Prostate gland (tissue), 2 donors: ENCODE measurements at regions of chr14 and their contacts with region 1.

Region 1: DNA sequence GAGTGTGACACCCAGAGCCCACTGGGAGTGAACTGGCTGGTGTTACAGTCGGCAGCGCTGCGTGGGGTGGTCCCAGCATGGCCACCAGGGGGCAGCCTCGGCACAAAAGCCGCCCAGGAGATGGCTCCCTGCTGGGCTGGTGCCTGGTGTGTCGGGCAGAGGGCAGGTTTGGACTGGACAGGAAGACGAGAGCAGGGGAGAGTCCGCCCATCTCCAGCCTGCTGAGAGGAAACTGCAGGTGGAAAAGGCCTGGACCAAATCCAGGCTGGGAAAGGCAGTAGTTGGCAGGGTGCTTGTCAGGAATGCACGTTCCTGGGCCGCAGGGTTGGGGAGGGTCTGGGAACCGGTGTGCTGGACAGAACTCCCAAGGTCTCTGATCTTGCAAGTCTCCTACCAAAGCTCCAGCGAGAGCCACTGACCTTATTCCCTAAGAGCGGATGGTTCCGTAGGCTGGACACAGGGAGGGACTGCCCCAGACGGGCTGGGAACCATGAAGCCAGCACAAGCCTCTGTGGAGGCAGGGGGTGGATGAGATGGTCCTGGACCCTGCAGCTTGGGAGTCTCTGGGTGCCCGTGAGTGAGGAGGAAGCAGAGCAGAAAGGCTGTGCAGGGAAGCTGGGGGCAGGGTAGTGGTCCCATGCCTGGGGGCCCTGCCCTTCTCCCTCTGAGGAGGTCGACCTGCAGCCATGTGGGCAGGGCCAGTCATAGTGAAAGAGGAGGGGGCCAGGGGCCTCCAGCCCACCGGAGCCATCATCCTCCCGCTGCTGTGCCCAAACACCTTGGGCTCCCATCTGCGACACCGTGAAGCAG is 1.8 kb downstream of the AHNAK2 start:
- DNase-seq: peak; percentile 80
- H3K4me3 ChIP-seq: no peak overlapping the region
- H3K27ac ChIP-seq: no peak overlapping the region
- H3K4me1 ChIP-seq: peaks cover 39% of the 10 kb centered on the region
- H3K27me3 ChIP-seq: no peaks in the 10 kb centered on the region
- CTCF ChIP-seq: peak; percentile 94 to 98 (median 98)
- POLR2A ChIP-seq: peak; percentile 17

Region 2: GRCh38 chr14:105020815-105021655 is 44.6 kb after region 1 on chr14 and contains the start of gene CDCA4:
- intact Hi-C with region 1: loop called (anchors 5 kb)
- DNase-seq: peak; percentile 97
- H3K4me3 ChIP-seq: peak within 1 kb of the TSS; percentile 81 to 82
- H3K27ac ChIP-seq: peak within 1 kb of the TSS; percentile 76 to 77
- H3K4me1 ChIP-seq: peaks cover 3% of the 10 kb centered on the region
- H3K27me3 ChIP-seq: no peaks in the 10 kb centered on the region
- CTCF ChIP-seq: peak in 2 of 4 experiments; percentile 27 to 29
- POLR2A ChIP-seq: peak; percentile 92
- total RNA-seq, gene CDCA4: 12.3 to 17.6 TPM

Region 3: DNA sequence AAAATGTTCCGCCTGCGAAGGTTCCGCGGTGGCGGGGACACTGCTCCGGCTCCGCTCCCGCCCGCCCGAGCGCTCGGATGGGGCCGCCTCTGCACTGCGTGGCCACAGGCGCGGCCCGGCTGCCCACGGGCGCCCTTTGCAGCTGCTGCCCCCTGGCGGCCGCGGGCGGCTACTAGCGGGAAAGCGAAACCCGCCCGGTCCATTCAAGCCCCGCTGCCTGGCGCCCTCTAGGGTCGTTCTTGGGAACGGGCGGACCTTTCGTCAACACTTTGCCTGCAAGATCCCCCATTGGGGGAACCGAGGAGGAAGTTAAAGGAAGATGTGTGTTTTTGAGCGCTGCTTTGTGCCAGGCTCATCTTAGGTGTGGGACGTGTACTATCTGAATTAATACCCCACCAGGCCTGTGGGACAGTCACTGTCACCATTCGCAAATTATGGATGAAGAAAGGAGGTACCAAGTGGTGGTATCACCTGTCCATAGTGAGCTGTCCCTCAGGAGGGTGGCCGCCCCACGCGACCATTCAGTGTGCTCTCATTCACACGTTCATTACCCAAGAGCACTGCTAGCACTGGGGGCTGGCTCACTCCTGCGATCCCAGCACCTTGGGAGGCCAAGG is 69.4 kb after region 1 on chr14:
- intact Hi-C with region 1: loop called (anchors 1 kb)
- DNase-seq: peak; percentile 81
- H3K4me3 ChIP-seq: no peak overlapping the region
- H3K27ac ChIP-seq: no peak overlapping the region
- H3K4me1 ChIP-seq: no peaks in the 10 kb centered on the region
- H3K27me3 ChIP-seq: no peaks in the 10 kb centered on the region
- CTCF ChIP-seq: peak; percentile 98 to 100 (median 100)
- POLR2A ChIP-seq: no peak